Natural killer cell (primary cell): ENCODE measurements at regions of chr17 and their contacts with region 1.

Region 1: DNA sequence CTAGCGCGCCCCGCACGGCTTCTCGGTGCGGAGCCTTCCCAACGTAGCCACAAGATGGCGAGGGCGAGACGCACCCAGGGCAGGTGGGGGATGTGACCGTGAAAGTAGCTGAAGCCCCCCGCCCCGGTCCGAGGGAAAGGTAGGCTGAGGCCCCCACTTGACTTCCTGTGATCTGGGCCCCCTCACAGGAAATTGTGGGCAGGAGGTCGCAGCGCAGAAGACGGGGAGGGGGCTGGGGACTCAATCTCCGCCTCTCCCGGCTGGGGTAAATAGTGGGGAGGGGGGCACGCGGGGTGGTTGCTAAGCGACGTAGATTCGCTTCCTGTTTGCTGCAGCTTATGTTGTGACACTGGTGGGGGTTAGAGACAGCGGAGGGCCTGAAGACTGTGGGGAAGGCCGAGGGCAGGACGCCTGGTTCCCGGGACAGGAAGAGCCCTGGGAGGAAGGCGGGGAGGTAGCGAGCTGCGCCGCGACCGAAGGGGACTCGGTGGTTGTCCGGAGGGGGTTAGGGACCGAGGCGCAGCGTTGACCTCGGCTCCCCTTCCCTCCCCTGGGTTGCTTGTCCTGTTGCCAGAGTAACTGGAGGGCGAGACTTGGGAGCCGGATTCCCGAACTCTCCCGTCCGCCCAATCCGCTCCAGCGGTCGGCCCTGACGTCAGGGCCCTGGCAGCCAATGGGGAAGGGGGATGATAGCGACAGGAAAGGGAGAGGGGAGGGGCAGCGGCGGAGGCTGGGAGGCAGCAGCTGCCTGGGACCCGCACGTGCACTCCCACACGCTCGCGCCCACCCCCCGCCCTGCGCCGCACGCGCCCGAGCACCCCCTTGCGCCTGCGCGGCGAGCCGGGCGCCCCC is 1.2 kb downstream of the KDM6B start:
- DNase-seq: peak; percentile 79 to 97
- ATAC-seq: peak; percentile 49 to 71 (median 60)
- H3K4me3 ChIP-seq: peak overlapping the region; percentile 59
- H3K4me3 Mint-ChIP-seq: peak overlapping the region; percentile 94
- H3K27ac ChIP-seq: peak overlapping the region; percentile 98
- H3K27ac Mint-ChIP-seq: peak overlapping the region; percentile 97 to 100
- H3K4me1 ChIP-seq: peaks cover 50% of the 10 kb centered on the region
- H3K4me1 Mint-ChIP-seq: peaks cover 37 to 62% of the 10 kb centered on the region in 2 donors
- H3K27me3 ChIP-seq: no peaks in the 10 kb centered on the region
- H3K27me3 Mint-ChIP-seq: peaks cover 0 to 9% of the 10 kb centered on the region in 2 donors
- CTCF ChIP-seq: peak; percentile 74

Region 2: DNA sequence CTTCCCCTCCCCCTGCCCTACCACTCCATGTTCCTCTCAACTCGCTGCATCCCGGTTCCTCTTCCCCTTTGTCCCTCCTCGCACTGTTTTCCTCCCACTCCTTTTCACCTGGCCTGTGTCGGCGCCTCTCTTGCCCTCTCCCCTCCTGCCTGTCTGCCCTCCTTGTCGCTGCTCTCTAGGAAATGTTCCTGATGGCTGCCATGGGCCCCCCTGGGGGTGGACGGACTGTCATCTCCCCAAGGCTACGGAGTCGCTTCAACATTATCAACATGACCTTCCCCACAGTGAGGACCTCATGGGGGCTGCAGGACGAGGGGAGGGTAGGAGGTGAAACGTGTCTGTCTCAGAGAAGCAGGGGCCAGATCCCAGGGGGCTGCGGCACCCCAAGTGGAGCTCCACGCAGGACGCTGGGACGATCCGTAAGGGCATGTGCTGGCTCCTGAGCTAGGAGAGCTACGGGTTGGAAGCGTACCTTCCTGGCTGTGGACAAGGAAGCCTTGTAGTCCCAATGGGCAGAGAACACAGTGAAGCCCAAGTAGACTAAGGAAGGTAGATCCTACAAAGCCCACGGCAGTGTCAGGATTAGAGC is 41.0 kb before region 1 on chr17:
- intact Hi-C with region 1: no loop called
- DNase-seq: no peak
- ATAC-seq: no peak
- H3K4me3 ChIP-seq: no peak overlapping the region
- H3K4me3 Mint-ChIP-seq: no peak overlapping the region
- H3K27ac ChIP-seq: no peak overlapping the region
- H3K27ac Mint-ChIP-seq: no peak overlapping the region
- H3K4me1 ChIP-seq: no peaks in the 10 kb centered on the region
- H3K4me1 Mint-ChIP-seq: no peaks in the 10 kb centered on the region
- H3K27me3 ChIP-seq: no peaks in the 10 kb centered on the region
- H3K27me3 Mint-ChIP-seq: peaks cover 0 to 4% of the 10 kb centered on the region in 2 donors
- CTCF ChIP-seq: no peak

Region 3: DNA sequence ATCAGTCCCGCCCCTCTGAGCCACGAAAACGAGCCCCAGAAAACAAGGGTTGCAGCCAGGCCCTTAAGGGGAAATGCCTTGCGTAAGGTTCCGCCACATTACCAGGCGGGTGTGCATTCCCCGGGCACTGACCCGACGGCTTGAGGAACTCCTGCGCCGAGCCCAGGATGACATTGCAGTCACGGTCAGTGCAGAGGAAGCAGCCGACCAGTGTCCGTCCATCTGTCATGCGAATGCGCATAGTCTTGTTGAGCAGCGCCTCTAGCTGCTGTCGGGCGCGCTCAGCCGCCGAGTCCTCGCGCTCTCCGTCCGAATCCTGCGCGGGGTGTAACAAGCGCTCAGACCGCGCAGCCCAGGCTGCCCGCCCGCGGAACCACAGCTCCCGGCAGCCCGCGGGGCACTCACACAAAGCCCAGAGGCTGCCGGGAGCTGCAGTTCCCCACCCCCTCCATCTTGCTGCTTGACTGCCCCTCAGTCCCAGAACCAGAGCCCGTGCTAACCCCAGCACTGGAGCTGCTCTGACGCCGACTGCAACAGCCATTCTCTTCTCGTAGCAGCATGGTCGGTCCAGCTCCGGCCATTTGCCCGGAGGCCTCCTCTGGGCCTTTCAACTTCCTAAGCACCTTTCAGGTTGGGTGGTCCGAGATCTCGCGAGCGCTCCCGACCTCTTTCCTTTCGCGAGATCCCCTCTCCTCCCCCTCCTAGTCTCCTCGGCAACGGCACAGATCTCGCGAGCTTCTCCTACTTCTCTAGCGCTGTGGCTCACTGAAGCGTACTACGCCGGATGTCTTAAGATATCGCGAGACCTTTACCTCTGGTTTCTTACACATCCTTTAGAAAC is 21.9 kb after region 1 on chr17 and contains the start of gene NAA38:
- intact Hi-C with region 1: loop called (anchors 2 kb)
- DNase-seq: peak; percentile 89 to 99
- ATAC-seq: peak; percentile 75 to 92 (median 82)
- H3K4me3 ChIP-seq: peak within 1 kb of the TSS; percentile 86
- H3K4me3 Mint-ChIP-seq: no peak within 1 kb of the TSS
- H3K27ac ChIP-seq: peak within 1 kb of the TSS; percentile 92
- H3K27ac Mint-ChIP-seq: no peak within 1 kb of the TSS
- H3K4me1 ChIP-seq: peaks cover 33% of the 10 kb centered on the region
- H3K4me1 Mint-ChIP-seq: peaks cover 5 to 9% of the 10 kb centered on the region in 2 donors
- H3K27me3 ChIP-seq: no peaks in the 10 kb centered on the region
- H3K27me3 Mint-ChIP-seq: no peaks in the 10 kb centered on the region
- CTCF ChIP-seq: no peak
- total RNA-seq, gene NAA38: 35.9 to 40.3 (median 37.3) TPM